ENCODE measurements at regions of chr3 and their contacts with region 1.

Region 1: GRCh38 chr3:43286115-43286840 is at the start of gene SNRK:
- DNase-seq: peak; percentile 98
- H3K4me3 Mint-ChIP-seq: peak within 1 kb of the TSS; percentile 95
- H3K27ac Mint-ChIP-seq: peak within 1 kb of the TSS; percentile 91
- H3K4me1 Mint-ChIP-seq: peaks cover 36% of the 10 kb centered on the region
- H3K27me3 Mint-ChIP-seq: peaks cover 8% of the 10 kb centered on the region
- total RNA-seq, gene SNRK: 29.0 and 30.3 TPM in 2 replicates

Region 2: DNA sequence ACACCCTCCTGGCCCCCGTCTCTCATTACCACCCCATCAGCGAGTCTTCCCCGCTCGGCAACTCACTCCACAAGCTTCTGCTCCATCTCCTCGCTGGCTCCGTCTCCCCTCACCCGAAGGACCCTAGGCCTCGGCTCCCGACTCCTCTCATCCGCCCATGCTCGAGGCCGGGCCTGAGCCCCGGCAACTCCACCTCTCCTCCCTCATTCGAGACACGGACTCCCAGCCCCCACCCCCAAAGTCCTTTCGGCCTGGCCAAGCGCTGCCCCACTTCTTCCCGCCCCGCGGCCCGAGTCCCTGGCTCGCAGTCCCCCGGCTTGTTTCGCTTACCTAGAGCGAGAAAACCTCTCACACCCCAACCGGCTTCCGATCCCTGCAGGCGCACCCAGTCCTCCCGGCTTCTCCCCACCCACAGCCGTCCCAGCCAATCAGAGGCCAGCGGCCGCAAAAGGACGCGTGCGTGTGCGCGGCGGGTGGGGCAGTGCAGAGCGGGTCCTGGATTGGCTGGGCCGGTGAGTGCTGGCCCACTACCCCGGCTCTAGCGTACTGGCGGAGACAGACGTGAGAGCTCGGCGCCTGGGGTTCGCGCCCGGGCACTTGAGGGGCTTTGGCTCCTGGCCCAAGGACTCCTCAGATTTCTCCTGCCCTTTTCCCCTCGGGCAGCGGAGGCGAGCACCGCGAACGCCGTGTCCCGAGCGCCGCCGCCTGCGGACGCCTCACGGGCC is 482.0 kb before region 1 on chr3 and contains the start of gene HIGD1A:
- intact Hi-C with region 1: loop called (anchors 10 kb)
- DNase-seq: peak; percentile 98
- H3K4me3 Mint-ChIP-seq: peak within 1 kb of the TSS; percentile 99
- H3K27ac Mint-ChIP-seq: peak within 1 kb of the TSS; percentile 97
- H3K4me1 Mint-ChIP-seq: peaks cover 29% of the 10 kb centered on the region
- H3K27me3 Mint-ChIP-seq: peaks cover 34% of the 10 kb centered on the region
- total RNA-seq, gene HIGD1A: 88.6 and 91.6 TPM in 2 replicates

Region 3: GRCh38 chr3:43162230-43163084 is 123.8 kb before region 1 on chr3:
- intact Hi-C with region 1: loop called (anchors 2 kb)
- DNase-seq: peak; percentile 89
- H3K4me3 Mint-ChIP-seq: peak overlapping the region; percentile 79
- H3K27ac Mint-ChIP-seq: peak overlapping the region; percentile 91
- H3K4me1 Mint-ChIP-seq: peaks cover 18% of the 10 kb centered on the region
- H3K27me3 Mint-ChIP-seq: peaks cover 2% of the 10 kb centered on the region

Region 4: GRCh38 chr3:43296565-43296964 is 10.3 kb after region 1 on chr3:
- intact Hi-C with region 1: loop called (anchors 1 kb)
- DNase-seq: peak; percentile 90
- H3K4me3 Mint-ChIP-seq: peak overlapping the region; percentile 74
- H3K27ac Mint-ChIP-seq: peak overlapping the region; percentile 88
- H3K4me1 Mint-ChIP-seq: peaks cover 65% of the 10 kb centered on the region
- H3K27me3 Mint-ChIP-seq: no peaks in the 10 kb centered on the region

Region 5: GRCh38 chr3:43345877-43346276 is 59.6 kb after region 1 on chr3:
- intact Hi-C with region 1: loop called (anchors 2 kb)
- DNase-seq: no peak
- H3K4me3 Mint-ChIP-seq: peak overlapping the region; percentile 61
- H3K27ac Mint-ChIP-seq: peak overlapping the region; percentile 90
- H3K4me1 Mint-ChIP-seq: peaks cover 60% of the 10 kb centered on the region
- H3K27me3 Mint-ChIP-seq: no peaks in the 10 kb centered on the region

Region 6: DNA sequence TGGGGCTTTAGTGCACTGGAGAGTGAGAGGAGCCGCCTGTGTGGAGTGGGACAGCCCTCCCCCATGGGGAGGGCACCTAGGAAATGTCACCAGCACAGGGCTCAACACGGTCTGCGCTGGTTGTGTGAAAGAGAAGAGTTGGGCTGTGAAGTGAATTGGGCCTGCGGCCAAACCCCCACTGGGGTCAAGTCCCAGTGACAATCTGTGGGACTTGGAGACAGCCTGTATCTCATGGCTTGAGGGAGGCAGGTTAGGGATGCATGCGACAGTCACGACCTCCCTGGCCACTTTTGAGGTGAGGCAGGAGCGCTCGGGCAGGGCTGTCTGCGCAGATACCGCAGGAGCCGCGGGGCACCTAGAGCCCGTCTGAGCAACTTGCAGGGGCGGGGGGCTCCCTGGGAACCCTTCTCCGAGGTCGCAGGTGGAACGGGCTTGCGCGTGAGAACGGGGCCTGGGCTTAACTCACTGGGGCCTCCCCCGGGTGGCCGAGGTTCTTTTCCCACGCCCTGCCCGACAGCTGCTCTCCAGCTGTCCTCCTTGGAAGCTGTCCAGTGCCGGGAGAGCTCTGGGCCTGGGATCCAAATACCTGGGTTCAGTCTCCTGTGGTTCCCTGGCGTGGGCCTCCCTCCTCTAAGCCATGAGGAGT is 77.5 kb after region 1 on chr3:
- intact Hi-C with region 1: no loop called
- DNase-seq: no peak
- H3K4me3 Mint-ChIP-seq: no peak overlapping the region
- H3K27ac Mint-ChIP-seq: no peak overlapping the region
- H3K4me1 Mint-ChIP-seq: no peaks in the 10 kb centered on the region
- H3K27me3 Mint-ChIP-seq: no peaks in the 10 kb centered on the region

Region 7: DNA sequence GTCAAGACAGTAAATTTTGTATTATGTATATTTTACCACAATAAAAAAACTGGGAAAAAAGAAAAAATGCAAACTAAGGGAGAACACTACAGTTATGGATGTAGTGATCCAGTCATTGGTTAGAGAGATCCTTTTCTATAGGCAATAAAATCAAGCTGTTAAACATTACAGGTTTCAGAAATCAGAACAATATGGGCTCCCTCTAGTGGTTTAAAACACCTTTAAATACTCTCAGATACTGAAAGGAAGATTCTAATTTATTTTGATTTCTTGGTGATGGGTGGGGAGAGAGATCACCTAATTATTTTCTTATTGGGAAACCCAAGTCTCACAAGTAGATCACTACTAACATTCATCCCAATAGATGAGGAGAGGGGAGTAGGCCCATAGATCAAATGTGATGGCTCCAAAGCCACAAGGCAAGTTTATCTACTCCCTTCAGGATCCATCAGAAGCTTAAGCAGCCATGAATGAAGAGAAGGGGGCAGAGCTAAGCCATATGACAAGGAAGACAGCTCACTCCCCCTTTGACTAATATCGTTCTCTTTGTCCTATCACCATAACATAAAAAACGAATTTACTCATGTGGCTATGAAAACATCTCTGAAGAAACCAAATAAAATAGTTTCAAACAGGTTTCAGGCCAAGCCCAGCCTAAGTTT is 216.9 kb after region 1 on chr3:
- intact Hi-C with region 1: loop called (anchors 2 kb)
- DNase-seq: no peak
- H3K4me3 Mint-ChIP-seq: no peak overlapping the region
- H3K27ac Mint-ChIP-seq: no peak overlapping the region
- H3K4me1 Mint-ChIP-seq: peaks cover 20% of the 10 kb centered on the region
- H3K27me3 Mint-ChIP-seq: peaks cover 12% of the 10 kb centered on the region